ENCODE measurements at regions of chr9 and their contacts with region 1.

Region 1: GRCh38 chr9:86303316-86303975 is 21.1 kb upstream of the ISCA1 start:
- DNase-seq: peak in 8 of 9 experiments; percentile 7 to 56 (median 42)
- ATAC-seq: peak; percentile 95
- H3K4me3 ChIP-seq: no peak overlapping the region
- H3K4me3 Mint-ChIP-seq: no peak overlapping the region
- H3K27ac ChIP-seq: no peak overlapping the region
- H3K27ac Mint-ChIP-seq: peak overlapping the region; percentile 72
- H3K4me1 ChIP-seq: peaks cover 8% of the 10 kb centered on the region
- H3K4me1 Mint-ChIP-seq: peaks cover 17% of the 10 kb centered on the region
- H3K27me3 ChIP-seq: no peaks in the 10 kb centered on the region
- H3K27me3 Mint-ChIP-seq: no peaks in the 10 kb centered on the region
- CTCF ChIP-seq: no peak

Region 2: GRCh38 chr9:86337469-86338108 is 34.1 kb after region 1 on chr9:
- CTCF ChIA-PET with region 1: no interaction called
- POLR2A ChIA-PET with region 1: no interaction called
- intact Hi-C with region 1: loop called in 1 of 2 experiments (anchors 5 kb)
- DNase-seq: peak in 2 of 9 experiments; percentile 42 to 67
- ATAC-seq: peak; percentile 39
- H3K4me3 ChIP-seq: peak overlapping the region; percentile 34 to 36
- H3K4me3 Mint-ChIP-seq: peak overlapping the region; percentile 83
- H3K27ac ChIP-seq: peak overlapping the region; percentile 35 to 68
- H3K27ac Mint-ChIP-seq: peak overlapping the region; percentile 87
- H3K4me1 ChIP-seq: peaks cover 18% of the 10 kb centered on the region
- H3K4me1 Mint-ChIP-seq: peaks cover 44% of the 10 kb centered on the region
- H3K27me3 ChIP-seq: no peaks in the 10 kb centered on the region
- H3K27me3 Mint-ChIP-seq: no peaks in the 10 kb centered on the region
- CTCF ChIP-seq: no peak

Region 3: DNA sequence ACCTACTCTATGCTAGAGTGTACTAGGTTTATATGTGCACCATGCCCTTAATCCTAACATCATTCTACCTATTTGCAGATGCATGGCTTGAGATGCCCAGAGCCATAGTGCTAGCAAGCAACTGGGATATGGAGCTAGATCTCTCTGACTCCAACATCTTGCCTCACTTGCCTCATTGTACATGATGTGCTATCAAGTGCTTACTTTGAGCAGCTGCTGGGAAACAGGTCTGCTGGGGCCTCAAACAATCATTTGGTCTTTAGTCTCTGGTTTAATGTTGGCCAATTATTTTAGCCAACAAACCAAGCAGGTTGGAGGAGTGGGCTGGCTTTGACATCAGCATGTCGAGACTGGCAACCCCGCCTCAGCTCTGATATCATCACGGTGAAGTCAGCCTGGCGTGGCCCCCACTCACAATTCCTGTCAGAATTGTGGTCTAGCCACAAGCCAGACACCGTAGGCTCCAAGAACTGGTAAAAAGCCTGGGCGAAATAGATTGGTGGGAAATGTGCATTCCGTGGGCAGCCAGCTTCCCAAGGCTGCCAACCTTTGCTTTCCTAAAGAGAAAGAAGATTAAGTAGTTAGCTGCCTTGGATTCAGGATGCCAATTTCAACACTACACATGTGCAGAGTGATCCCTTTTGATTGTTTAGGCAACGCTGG is 664.9 kb after region 1 on chr9:
- CTCF ChIA-PET with region 1: no interaction called
- POLR2A ChIA-PET with region 1: no interaction called
- intact Hi-C with region 1: no loop called
- DNase-seq: no peak
- ATAC-seq: no peak
- H3K4me3 ChIP-seq: no peak overlapping the region
- H3K4me3 Mint-ChIP-seq: no peak overlapping the region
- H3K27ac ChIP-seq: no peak overlapping the region
- H3K27ac Mint-ChIP-seq: no peak overlapping the region
- H3K4me1 ChIP-seq: no peaks in the 10 kb centered on the region
- H3K4me1 Mint-ChIP-seq: no peaks in the 10 kb centered on the region
- H3K27me3 ChIP-seq: no peaks in the 10 kb centered on the region
- H3K27me3 Mint-ChIP-seq: peaks cover 29% of the 10 kb centered on the region
- CTCF ChIP-seq: no peak

Measured in CD8-positive, alpha-beta T cell (primary cell).